ENCODE measurements at regions of chrX and their contacts with region 1.

Region 1: DNA sequence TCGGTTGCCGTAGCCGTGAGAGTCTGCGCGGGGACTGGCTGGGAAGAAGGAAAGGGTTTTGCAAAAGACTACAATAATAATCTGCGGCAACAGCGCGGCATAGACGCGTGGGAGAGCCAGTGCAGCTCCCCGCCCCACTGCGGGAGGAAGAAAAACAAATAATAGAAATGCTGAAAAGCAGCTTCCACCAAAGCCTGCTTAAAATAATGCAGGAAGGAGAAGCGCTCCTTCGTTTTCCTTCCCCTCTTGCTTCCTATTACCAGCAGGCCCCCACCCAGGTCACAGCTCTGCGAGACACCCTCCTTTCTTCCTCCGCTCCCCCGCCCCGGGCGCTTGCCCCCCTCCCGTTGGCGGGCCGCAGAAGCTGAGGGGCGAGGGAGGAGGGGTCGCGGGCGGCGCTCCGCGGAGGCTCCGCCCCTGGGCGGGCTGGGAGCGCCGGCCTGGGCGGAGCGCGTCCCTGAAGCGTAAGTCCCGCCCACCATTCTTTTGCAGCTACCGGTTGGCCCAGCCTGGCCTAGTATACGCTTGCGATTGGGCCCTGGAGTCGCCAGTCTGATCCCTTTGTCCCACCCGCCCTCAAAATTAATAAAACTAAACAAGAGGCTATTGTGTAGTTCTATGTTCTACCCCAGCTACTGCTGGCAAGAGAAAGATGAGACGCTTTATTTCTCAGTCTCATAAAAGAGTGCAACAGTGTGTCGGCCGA is 636 bp upstream of the AMOT start:
- DNase-seq: peak; percentile 55
- H3K4me3 Mint-ChIP-seq: peak overlapping the region; percentile 87
- H3K27ac Mint-ChIP-seq: no peak overlapping the region
- H3K4me1 Mint-ChIP-seq: peaks cover 18% of the 10 kb centered on the region
- H3K27me3 Mint-ChIP-seq: peaks cover 12% of the 10 kb centered on the region

Region 2: GRCh38 chrX:111680988-111681779 is 1160.1 kb before region 1 on chrX and contains the start of gene ALG13:
- intact Hi-C with region 1: loop called (anchors 5 kb)
- DNase-seq: peak; percentile 79
- H3K4me3 Mint-ChIP-seq: peak within 1 kb of the TSS; percentile 88
- H3K27ac Mint-ChIP-seq: peak within 1 kb of the TSS; percentile 96
- H3K4me1 Mint-ChIP-seq: peaks cover 23% of the 10 kb centered on the region
- H3K27me3 Mint-ChIP-seq: no peaks in the 10 kb centered on the region
- total RNA-seq, gene ALG13: 53.4 and 57.6 TPM in 2 replicates

Region 3: GRCh38 chrX:112678831-112679230 is 162.4 kb before region 1 on chrX:
- intact Hi-C with region 1: loop called (anchors 5 kb)
- DNase-seq: no peak
- H3K4me3 Mint-ChIP-seq: peak overlapping the region; percentile 56
- H3K27ac Mint-ChIP-seq: peak overlapping the region; percentile 70
- H3K4me1 Mint-ChIP-seq: peaks cover 32% of the 10 kb centered on the region
- H3K27me3 Mint-ChIP-seq: peaks cover 2% of the 10 kb centered on the region

Region 4: DNA sequence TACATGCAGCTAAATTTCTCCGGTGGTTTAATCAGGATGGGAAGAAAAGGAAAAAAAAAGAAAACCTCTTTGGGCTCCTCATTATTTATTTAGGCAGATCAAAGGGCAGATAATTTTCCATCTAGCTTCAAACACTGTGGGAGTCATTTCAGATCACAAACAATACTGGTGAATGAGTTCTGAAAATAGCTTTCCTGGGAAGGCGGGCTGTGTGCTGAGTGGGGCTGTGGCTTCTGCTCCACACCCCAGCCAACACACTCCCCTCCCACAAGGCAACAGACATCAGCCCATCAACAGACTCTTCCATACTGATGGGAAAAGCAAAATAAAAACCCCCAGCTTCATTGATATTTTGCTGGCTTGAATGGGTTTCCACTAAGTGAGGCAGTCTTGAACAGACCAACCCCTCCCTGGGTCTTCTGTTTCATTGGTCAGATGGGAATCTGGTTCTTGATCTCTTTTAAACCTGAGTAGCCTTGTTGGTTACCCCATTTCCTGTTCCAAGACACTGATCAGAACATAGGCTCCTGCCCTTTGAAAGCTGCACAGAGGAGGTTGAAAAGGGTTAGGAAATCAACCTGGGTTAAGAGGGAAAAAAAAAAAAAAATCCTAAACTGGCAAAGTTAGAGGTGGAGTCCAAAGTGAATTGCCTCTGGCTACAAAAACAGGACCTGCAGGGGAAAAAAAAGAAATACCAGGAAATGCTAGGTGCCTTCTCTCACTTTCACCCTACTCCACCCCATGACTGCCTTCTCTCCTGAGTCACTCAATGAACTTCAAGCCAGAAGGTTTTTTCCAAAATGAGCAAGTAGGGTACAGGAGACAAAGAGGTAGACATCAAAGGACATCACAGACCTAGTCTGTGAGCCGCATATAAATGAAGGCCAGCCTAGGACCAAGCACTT is 20.7 kb before region 1 on chrX:
- intact Hi-C with region 1: loop called (anchors 2 kb)
- DNase-seq: no peak
- H3K4me3 Mint-ChIP-seq: no peak overlapping the region
- H3K27ac Mint-ChIP-seq: no peak overlapping the region
- H3K4me1 Mint-ChIP-seq: peaks cover 12% of the 10 kb centered on the region
- H3K27me3 Mint-ChIP-seq: no peaks in the 10 kb centered on the region

Region 5: GRCh38 chrX:112851806-112852205 is 10.5 kb after region 1 on chrX:
- intact Hi-C with region 1: loop called (anchors 1 kb)
- DNase-seq: no peak
- H3K4me3 Mint-ChIP-seq: no peak overlapping the region
- H3K27ac Mint-ChIP-seq: peak overlapping the region; percentile 12
- H3K4me1 Mint-ChIP-seq: peaks cover 34% of the 10 kb centered on the region
- H3K27me3 Mint-ChIP-seq: no peaks in the 10 kb centered on the region